H1 (cell line): ENCODE measurements at regions of chr3 and their contacts with region 1.

Region 1: DNA sequence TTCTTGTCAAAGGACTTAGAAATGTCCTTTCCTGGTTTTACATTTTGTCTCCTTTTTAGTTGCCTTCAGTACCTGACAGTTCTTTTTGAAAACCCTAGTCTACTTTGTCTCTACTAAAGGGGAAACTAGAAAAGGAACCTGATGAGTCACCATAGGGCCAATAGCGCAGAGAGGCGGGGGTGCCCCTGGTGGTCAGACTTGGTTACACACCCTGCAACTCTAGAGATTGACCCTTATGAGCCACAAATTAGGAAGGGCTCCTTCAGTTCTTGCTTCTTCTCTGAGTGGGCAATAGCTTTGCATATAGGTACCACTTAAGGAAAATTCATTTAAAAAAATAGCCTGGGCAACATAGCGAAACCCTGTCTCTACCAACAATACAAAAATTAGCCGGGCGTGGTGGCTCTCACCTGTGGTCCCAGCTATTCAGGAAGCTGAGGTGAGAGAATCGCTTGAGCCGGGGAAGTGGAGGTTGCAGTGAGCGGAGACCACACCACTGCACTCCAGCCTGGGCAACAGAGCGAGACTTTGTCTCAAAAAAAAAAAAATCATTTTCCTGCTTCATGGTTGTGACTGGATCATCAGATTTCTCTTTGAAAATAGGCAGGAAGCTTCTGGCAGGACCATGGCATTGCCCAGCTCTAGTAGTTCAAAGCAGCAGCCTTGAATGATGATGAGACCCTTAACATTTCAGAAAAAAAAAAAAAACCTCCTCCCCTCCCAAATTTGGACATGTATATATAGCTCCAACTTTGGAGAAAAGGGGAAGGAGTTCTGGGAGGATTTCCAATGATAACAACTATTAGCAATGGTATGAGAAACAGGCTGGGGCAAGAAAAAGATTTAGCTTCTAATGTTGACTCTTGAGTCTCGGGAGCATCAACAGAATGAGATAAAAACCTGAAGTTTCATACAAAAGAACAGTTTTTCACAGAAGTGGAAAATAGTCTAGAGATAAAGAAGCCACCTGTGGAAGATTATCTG is 45.2 kb upstream of the RASA2 start:
- DNase-seq: peak in 1 of 2 experiments; percentile 90
- H3K4me3 ChIP-seq: no peak overlapping the region
- H3K27ac ChIP-seq: no peak overlapping the region
- H3K4me1 ChIP-seq: no peaks in the 10 kb centered on the region
- H3K27me3 ChIP-seq: no peaks in the 10 kb centered on the region
- CTCF ChIP-seq: peak; percentile 84 to 90 (median 89)
- EP300 ChIP-seq: 0 out of 3 replicates have a peak, but pooled peaks of 1 of the 2 experiments have one; percentile 8
- POLR2A ChIP-seq: no peak
- RAD21 ChIP-seq: peak; percentile 74 to 83

Region 2: DNA sequence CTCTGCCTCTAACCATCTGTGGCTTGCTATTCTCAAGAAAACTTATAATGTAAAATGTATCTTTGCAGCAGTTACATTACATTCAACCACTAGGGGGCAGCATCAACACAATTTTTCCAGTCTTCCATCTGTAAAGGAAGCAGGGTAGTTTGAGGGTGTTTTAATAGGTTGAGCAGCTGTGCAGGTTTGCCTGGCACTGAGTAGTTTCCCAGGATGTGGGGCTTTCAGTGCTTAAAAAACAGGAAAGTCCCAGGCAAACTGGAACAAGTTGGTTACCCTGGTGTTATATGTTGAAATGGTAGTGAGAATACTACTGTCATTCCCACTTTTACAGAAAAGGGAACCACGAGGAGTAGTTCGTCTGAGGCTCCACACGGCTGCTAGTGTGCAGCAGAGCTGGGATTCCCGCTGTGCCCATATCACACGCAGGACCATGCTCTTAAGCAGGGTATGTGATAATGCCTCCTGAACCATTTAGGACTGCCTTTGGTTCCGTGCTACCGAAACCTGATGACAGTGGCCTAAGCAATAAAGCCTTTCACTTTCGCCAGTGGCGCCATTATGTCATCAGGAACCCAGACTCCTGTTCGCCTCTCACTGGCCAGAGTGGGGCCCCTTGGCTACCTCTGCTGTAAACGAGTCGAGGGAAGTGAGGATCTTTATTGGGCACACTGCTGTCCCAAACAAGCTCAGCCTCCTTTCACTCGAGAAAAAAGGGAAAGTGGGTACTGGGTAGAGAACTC is 138.0 kb before region 1 on chr3:
- CTCF ChIA-PET with region 1: interaction called, 35 read pairs
- POLR2A ChIA-PET with region 1: interaction called, 3 read pairs
- DNase-seq: peak in 1 of 2 experiments; percentile 68
- H3K4me3 ChIP-seq: no peak overlapping the region
- H3K27ac ChIP-seq: no peak overlapping the region
- H3K4me1 ChIP-seq: no peaks in the 10 kb centered on the region; a peak in 2 of 7 replicates
- H3K27me3 ChIP-seq: peaks cover 0 to 7% (median 3%) of the 10 kb centered on the region in 4 experiments; a peak in 1 of 7 replicates
- CTCF ChIP-seq: peak in 2 of 3 experiments; percentile 60 to 62; a peak in 3 of 4 replicates
- EP300 ChIP-seq: no peak
- POLR2A ChIP-seq: no peak
- RAD21 ChIP-seq: peak; percentile 64 to 71

Region 3: DNA sequence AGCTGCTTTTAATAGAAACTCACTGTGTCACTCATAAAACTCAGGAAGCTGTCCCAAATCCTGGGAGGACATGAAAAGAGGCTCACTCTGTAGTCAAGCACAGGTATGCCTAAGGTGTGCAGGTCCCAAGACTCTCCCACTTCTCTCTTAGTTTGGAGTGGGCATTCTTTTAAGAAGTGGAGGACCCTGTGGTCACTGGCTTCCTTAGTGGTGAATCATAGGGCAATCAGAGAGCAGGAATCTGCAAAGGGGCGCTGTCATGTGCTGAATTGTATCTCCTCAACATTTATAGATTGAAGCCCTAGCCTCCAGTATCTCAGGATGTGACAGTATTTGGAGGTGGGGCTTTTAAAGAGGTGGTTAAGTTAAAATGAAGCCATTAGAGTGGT is 120.6 kb before region 1 on chr3:
- CTCF ChIA-PET with region 1: interaction called, 11 read pairs
- POLR2A ChIA-PET with region 1: no interaction called
- DNase-seq: no peak
- H3K4me3 ChIP-seq: no peak overlapping the region
- H3K27ac ChIP-seq: no peak overlapping the region
- H3K4me1 ChIP-seq: no peaks in the 10 kb centered on the region
- H3K27me3 ChIP-seq: no peaks in the 10 kb centered on the region
- CTCF ChIP-seq: no peak
- EP300 ChIP-seq: no peak
- POLR2A ChIP-seq: no peak
- RAD21 ChIP-seq: no peak

Region 4: DNA sequence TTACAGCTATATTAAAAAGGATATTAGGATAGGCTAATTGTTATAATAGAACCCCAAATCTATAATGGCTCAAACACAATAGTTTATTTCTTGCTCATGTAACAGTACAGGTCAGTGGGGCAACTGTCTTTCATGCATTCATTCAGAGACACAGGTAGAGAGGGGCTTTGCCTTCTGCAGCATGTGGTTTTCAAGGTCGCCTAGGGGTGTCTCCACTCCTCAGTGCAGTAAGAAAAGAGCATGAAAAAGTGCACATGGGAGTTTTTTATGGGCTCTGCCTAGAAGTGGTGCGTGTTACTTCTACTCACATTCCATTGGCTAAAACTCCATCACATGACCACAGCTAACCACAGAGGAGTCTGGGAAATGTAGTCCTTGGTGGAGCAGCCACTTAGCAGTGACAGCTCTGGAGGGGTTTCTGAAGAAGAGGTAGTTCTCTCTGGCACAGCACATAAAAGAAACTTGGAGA is 71.6 kb before region 1 on chr3:
- CTCF ChIA-PET with region 1: interaction called, 14 read pairs
- POLR2A ChIA-PET with region 1: interaction called, 3 read pairs
- DNase-seq: no peak
- H3K4me3 ChIP-seq: no peak overlapping the region
- H3K27ac ChIP-seq: no peak overlapping the region
- H3K4me1 ChIP-seq: peaks cover 2 to 13% (median 8%) of the 10 kb centered on the region in 4 experiments
- H3K27me3 ChIP-seq: no peaks in the 10 kb centered on the region
- CTCF ChIP-seq: peak; percentile 5 to 50 (median 35)
- EP300 ChIP-seq: 0 out of 3 replicates have a peak, but pooled peaks of 1 of the 2 experiments have one; percentile 31
- POLR2A ChIP-seq: no peak
- RAD21 ChIP-seq: peak; percentile 21 to 46; a peak in 2 of 4 replicates

Region 5: DNA sequence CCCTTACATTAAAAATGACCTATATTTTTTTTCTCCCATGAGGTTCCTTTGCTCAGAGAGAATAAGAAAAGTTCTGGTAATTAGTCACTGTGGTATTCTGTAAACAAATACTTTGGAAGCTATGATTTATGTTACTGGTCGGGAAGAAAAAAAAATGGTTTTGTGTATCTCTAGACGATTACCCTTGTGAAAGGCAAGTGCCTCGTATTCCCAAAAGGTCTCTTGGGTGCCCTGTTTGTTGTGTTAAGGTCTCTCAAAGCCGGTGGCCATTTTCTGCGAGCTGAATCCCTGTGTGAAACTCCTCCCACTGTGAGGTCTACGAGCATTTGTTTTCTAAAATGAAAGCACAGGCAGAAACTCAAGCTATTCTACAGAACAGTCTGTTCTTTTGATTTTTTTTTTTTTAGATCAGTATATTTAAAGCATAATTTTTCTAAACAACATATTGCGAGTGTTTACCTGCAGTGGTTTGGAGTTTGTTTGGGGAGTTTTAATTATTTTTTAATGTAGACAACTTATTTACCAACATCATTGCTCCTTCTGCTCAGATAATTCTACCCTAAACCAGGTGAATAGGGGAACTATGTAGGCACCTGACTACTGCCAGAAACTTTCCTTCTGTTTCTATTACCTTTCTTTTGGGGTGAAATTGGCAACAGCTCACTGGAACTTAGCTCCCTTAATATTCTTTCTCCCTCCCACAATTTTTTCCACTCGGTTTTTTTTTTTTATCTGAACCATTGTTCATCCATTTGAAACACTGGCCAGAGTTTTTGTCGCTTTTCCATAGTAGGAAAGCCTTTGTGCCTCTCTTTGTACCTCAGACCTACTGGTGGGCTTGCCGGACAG is 29.4 kb before region 1 on chr3:
- CTCF ChIA-PET with region 1: interaction called, 10 read pairs
- POLR2A ChIA-PET with region 1: no interaction called
- DNase-seq: no peak
- H3K4me3 ChIP-seq: no peak overlapping the region
- H3K27ac ChIP-seq: no peak overlapping the region
- H3K4me1 ChIP-seq: no peaks in the 10 kb centered on the region; a peak in 2 of 7 replicates
- H3K27me3 ChIP-seq: peaks cover 5 to 19% (median 13%) of the 10 kb centered on the region in 4 experiments; a peak in 6 of 7 replicates
- CTCF ChIP-seq: no peak
- EP300 ChIP-seq: no peak
- POLR2A ChIP-seq: no peak
- RAD21 ChIP-seq: no peak

Region 6: GRCh38 chr3:141452036-141452435 is 10.4 kb after region 1 on chr3:
- CTCF ChIA-PET with region 1: interaction called, 185 read pairs
- POLR2A ChIA-PET with region 1: interaction called, 3 read pairs
- DNase-seq: no peak
- H3K4me3 ChIP-seq: no peak overlapping the region
- H3K27ac ChIP-seq: no peak overlapping the region
- H3K4me1 ChIP-seq: peaks cover 0 to 3% (median 0%) of the 10 kb centered on the region in 4 experiments; a peak in 3 of 7 replicates
- H3K27me3 ChIP-seq: no peaks in the 10 kb centered on the region
- CTCF ChIP-seq: peak in 2 of 3 experiments; percentile 65 to 77; a peak in 3 of 4 replicates
- EP300 ChIP-seq: no peak
- POLR2A ChIP-seq: no peak
- RAD21 ChIP-seq: peak; percentile 90 to 92

Region 7: GRCh38 chr3:141487521-141488252 is 46.0 kb after region 1 on chr3:
- CTCF ChIA-PET with region 1: no interaction called
- POLR2A ChIA-PET with region 1: no interaction called
- DNase-seq: peak; percentile 23 to 82
- H3K4me3 ChIP-seq: peak overlapping the region; percentile 63 to 74 (median 73)
- H3K27ac ChIP-seq: peak overlapping the region; percentile 88
- H3K4me1 ChIP-seq: peaks cover 3 to 20% (median 11%) of the 10 kb centered on the region in 4 experiments; a peak in 6 of 7 replicates
- H3K27me3 ChIP-seq: no peaks in the 10 kb centered on the region
- CTCF ChIP-seq: no peak
- EP300 ChIP-seq: no peak
- POLR2A ChIP-seq: peak in 1 of 2 experiments; percentile 28; a peak in 1 of 3 replicates
- RAD21 ChIP-seq: no peak